A549 (cell line): ENCODE measurements at regions of chr7 and their contacts with region 1.

Region 1: GRCh38 chr7:55415173-55415778 is 50.1 kb downstream of the LANCL2 start:
- DNase-seq: peak; percentile 75 to 81
- ATAC-seq: peak; percentile 96 to 99
- H3K4me3 ChIP-seq: no peak overlapping the region
- H3K27ac ChIP-seq: no peak overlapping the region
- H3K4me1 ChIP-seq: no peaks in the 10 kb centered on the region
- CTCF ChIP-seq: peak; percentile 85
- EP300 ChIP-seq: no peak
- POLR2A ChIP-seq: no peak
- RAD21 ChIP-seq: peak; percentile 63 to 67

Region 2: GRCh38 chr7:55280031-55280454 is 135.2 kb before region 1 on chr7:
- CTCF ChIA-PET with region 1: interaction called, 136 read pairs
- POLR2A ChIA-PET with region 1: no interaction called
- DNase-seq: peak; percentile 67 to 73
- ATAC-seq: peak; percentile 90 to 97
- H3K4me3 ChIP-seq: no peak overlapping the region
- H3K27ac ChIP-seq: no peak overlapping the region
- H3K4me1 ChIP-seq: no peaks in the 10 kb centered on the region
- CTCF ChIP-seq: peak; percentile 78
- EP300 ChIP-seq: no peak
- POLR2A ChIP-seq: no peak
- RAD21 ChIP-seq: peak; percentile 88 to 92

Region 3: DNA sequence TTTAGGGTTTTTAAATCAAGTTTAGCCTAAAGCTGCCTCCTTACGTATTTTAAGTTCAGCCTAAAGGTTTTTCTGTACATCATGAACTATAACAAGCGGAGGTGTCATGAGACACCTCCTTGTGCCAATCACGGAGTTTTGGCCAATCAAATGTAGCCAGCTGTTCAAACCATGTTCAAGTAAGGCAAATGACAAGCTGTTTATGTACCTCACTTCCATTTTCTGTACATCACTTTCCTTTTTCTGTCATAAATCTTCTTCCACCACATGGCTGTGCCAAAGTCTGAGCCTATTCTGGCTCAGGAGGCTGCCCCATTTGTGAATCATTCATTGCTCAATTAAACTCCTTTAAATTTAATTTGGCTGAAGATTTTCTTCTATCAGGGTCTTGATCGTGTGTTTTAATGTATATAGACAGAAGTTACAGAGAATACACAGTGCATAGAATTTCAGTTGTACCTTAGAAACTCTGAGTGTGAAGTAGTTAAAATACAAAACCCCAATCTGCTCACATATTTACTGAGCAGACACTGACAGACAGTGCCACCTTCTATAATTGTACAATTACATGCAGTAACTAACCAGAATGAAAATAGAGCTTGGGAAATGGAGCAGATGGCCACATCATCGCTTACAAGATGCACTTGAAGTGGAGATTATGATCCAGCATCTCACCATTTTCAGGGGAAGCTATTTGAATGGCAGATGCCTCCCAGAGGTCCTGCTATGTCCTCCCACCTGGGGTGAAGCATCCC is 127.0 kb before region 1 on chr7:
- CTCF ChIA-PET with region 1: interaction called, 136 read pairs
- POLR2A ChIA-PET with region 1: no interaction called
- DNase-seq: no peak
- ATAC-seq: 0 out of 6 replicates have a peak, but pooled peaks of 1 of the 2 experiments have one; percentile 50
- H3K4me3 ChIP-seq: no peak overlapping the region
- H3K27ac ChIP-seq: no peak overlapping the region
- H3K4me1 ChIP-seq: no peaks in the 10 kb centered on the region
- CTCF ChIP-seq: no peak
- EP300 ChIP-seq: no peak
- POLR2A ChIP-seq: no peak
- RAD21 ChIP-seq: no peak

Region 4: GRCh38 chr7:55309040-55309991 is 106.0 kb before region 1 on chr7:
- CTCF ChIA-PET with region 1: interaction called, 12 read pairs
- POLR2A ChIA-PET with region 1: no interaction called
- DNase-seq: no peak
- ATAC-seq: no peak
- H3K4me3 ChIP-seq: no peak overlapping the region
- H3K27ac ChIP-seq: no peak overlapping the region
- H3K4me1 ChIP-seq: no peaks in the 10 kb centered on the region
- CTCF ChIP-seq: no peak
- EP300 ChIP-seq: no peak
- POLR2A ChIP-seq: no peak
- RAD21 ChIP-seq: no peak